Activated T-helper 1 cell treated with anti-CD3 and anti-CD28 coated beads, Interleukin-12 subunit alpha, Interleukin-12 subunit beta, Interleukin-2, Interleukin-4 antibody, amounts not matched to agents 30 ng/mL and 10 ng/mL and 1 ng/mL, durations not matched to agents 14 hours and 24 hours and 36 hours (primary cell): ENCODE measurements at regions of chr12 and their contacts with region 1.

Region 1: GRCh38 chr12:97148941-97149559 is 242.0 kb downstream of the NEDD1 start:
- DNase-seq: peak; percentile 7
- H3K4me3 Mint-ChIP-seq: no peak overlapping the region
- H3K27ac Mint-ChIP-seq: no peak overlapping the region
- H3K4me1 Mint-ChIP-seq: no peaks in the 10 kb centered on the region
- H3K27me3 Mint-ChIP-seq: peaks cover 13% of the 10 kb centered on the region

Region 2: DNA sequence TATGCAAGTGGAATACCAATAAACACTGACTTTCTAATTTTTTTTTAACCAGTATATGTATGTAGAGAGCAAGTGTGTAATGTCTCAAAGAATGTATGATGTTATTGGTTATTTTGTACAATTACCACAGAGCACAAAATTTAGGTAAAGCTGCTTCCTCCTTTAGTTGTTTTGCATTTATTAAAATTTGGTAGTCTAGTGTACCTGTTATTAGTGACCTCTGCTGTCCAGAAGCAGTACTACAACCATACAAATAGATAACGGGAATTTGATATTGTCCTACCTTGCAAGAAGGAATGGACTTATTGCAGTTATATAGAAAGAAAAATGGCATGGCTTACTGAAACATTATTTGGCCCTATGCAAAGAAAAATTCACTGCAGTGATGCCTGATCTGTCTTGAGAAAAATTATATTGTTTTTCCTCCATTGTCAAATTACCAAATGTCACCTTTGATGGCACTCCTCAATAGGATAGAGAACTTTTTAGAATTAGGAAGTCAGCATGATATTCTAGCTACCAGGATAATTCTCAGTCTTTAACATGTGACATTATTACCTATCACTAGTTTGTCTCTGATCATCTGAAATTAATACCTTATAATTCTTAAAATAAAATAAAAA is 159.6 kb after region 1 on chr12:
- intact Hi-C with region 1: loop called (anchors 1 kb)
- DNase-seq: no peak
- H3K4me3 Mint-ChIP-seq: no peak overlapping the region
- H3K27ac Mint-ChIP-seq: no peak overlapping the region
- H3K4me1 Mint-ChIP-seq: no peaks in the 10 kb centered on the region
- H3K27me3 Mint-ChIP-seq: peaks cover 6% of the 10 kb centered on the region

Region 3: GRCh38 chr12:97404543-97404942 is 255.5 kb after region 1 on chr12:
- intact Hi-C with region 1: loop called (anchors 1 kb)
- DNase-seq: no peak
- H3K4me3 Mint-ChIP-seq: no peak overlapping the region
- H3K27ac Mint-ChIP-seq: no peak overlapping the region
- H3K4me1 Mint-ChIP-seq: no peaks in the 10 kb centered on the region
- H3K27me3 Mint-ChIP-seq: no peaks in the 10 kb centered on the region

Region 4: GRCh38 chr12:98550803-98551202 is 1401.8 kb after region 1 on chr12:
- intact Hi-C with region 1: no loop called
- DNase-seq: no peak
- H3K4me3 Mint-ChIP-seq: no peak overlapping the region
- H3K27ac Mint-ChIP-seq: peak overlapping the region; percentile 58
- H3K4me1 Mint-ChIP-seq: peaks cover 6% of the 10 kb centered on the region
- H3K27me3 Mint-ChIP-seq: no peaks in the 10 kb centered on the region